ENCODE measurements at regions of chr2 and their contacts with region 1.

Region 1: DNA sequence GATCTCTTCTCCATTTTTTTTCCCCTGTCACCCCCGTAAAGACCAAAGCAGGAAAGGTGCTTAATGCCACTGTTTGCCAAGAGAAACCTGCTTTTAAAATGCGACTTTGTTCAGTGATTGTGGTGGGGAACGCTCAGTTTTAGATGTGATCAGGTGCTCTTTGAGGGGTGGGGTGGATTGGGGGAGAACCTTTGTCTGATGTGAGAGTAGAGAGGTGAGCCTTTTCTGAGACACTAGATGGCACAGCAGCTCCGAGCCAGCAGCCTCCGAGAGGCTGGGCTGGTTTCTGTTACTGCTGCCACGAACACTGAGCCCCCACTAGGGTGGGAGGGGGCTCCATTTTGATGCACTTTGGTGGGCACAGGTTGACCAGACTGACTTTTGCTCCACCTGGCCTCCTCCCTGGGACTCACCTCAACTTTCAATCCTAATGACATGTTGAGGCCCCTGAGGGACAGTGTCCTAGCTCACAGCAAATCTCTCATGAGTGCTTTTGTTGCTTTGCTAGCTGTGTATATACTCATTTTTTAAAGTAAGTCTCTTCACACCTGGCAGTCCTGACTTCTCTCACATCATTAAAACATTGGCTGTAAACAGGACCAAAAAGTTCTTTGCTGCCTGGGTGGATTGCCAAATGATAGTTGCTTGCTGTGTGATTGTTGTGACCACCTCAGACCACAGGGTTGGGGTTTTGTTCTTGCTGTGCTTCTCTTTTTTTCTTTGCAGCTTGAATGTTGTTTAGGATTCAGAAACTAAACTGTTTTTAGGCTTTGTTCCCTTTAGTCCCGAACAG is 98.2 kb upstream of the MAP3K20 start:
- DNase-seq: no peak
- H3K4me3 ChIP-seq: no peak overlapping the region
- H3K27ac ChIP-seq: no peak overlapping the region
- H3K4me1 ChIP-seq: peaks cover 0 to 2% of the 10 kb centered on the region in 2 donors
- H3K27me3 ChIP-seq: no peaks in the 10 kb centered on the region
- CTCF ChIP-seq: no peak
- POLR2A ChIP-seq: no peak

Region 2: GRCh38 chr2:171104379-171104778 is 1873.1 kb before region 1 on chr2:
- intact Hi-C with region 1: no loop called
- DNase-seq: no peak
- H3K4me3 ChIP-seq: no peak overlapping the region
- H3K27ac ChIP-seq: no peak overlapping the region
- H3K4me1 ChIP-seq: no peaks in the 10 kb centered on the region
- H3K27me3 ChIP-seq: no peaks in the 10 kb centered on the region
- CTCF ChIP-seq: no peak
- POLR2A ChIP-seq: no peak

Region 3: GRCh38 chr2:173017646-173018420 is 40.4 kb after region 1 on chr2:
- intact Hi-C with region 1: loop called in 1 of 2 experiments (anchors 5 kb)
- DNase-seq: peak in 3 of 7 donors; percentile 42 to 63 (median 54)
- H3K4me3 ChIP-seq: no peak overlapping the region
- H3K27ac ChIP-seq: peak overlapping the region in 2 of 5 donors; percentile 1 to 45
- H3K4me1 ChIP-seq: peaks cover 0 to 11% of the 10 kb centered on the region in 2 donors
- H3K27me3 ChIP-seq: no peaks in the 10 kb centered on the region
- CTCF ChIP-seq: no peak
- POLR2A ChIP-seq: no peak

Region 4: DNA sequence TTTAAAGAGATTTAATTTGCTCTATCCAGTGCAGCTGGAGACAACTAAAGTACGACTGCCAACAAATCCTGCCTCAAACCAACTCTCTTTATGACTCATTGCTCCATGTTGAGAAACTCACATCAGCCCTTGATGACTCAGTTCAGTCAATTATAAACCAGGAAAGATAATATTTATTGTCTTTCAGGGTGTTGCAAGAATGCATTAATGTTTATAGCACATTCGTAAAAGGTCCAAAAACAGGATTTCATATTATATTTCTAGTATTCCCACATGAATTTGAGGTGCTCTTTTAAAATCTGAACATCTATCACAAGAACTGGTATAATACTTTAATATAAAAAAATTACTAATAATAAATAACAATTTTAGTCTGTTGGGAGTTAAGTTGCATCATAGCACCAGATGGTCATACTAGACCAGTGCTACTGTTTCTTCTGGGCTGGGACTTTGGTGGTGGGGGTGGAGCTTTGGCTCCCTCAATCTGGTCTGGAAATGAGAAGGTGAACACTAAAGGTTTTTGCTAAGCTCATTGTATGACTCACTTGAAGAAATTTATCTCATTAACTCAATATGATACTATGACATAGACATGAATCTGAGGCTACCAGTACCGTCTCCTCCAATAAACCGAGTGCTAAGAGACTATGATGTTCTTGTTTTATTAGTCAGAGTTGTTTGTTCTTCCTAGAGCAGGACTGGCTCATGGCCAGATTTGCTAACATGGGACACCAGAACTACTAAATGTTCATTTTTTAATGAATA is 71.6 kb after region 1 on chr2:
- intact Hi-C with region 1: no loop called
- DNase-seq: peak; percentile 40 to 81 (median 77)
- H3K4me3 ChIP-seq: no peak overlapping the region
- H3K27ac ChIP-seq: peak overlapping the region; percentile 16 to 77 (median 45)
- H3K4me1 ChIP-seq: peaks cover 10 to 16% of the 10 kb centered on the region in 2 donors
- H3K27me3 ChIP-seq: no peaks in the 10 kb centered on the region
- CTCF ChIP-seq: no peak
- POLR2A ChIP-seq: no peak

Region 5: GRCh38 chr2:173254659-173255058 is 277.2 kb after region 1 on chr2:
- intact Hi-C with region 1: no loop called
- DNase-seq: no peak
- H3K4me3 ChIP-seq: no peak overlapping the region
- H3K27ac ChIP-seq: no peak overlapping the region
- H3K4me1 ChIP-seq: no peaks in the 10 kb centered on the region
- H3K27me3 ChIP-seq: no peaks in the 10 kb centered on the region
- CTCF ChIP-seq: no peak
- POLR2A ChIP-seq: no peak

Region 6: DNA sequence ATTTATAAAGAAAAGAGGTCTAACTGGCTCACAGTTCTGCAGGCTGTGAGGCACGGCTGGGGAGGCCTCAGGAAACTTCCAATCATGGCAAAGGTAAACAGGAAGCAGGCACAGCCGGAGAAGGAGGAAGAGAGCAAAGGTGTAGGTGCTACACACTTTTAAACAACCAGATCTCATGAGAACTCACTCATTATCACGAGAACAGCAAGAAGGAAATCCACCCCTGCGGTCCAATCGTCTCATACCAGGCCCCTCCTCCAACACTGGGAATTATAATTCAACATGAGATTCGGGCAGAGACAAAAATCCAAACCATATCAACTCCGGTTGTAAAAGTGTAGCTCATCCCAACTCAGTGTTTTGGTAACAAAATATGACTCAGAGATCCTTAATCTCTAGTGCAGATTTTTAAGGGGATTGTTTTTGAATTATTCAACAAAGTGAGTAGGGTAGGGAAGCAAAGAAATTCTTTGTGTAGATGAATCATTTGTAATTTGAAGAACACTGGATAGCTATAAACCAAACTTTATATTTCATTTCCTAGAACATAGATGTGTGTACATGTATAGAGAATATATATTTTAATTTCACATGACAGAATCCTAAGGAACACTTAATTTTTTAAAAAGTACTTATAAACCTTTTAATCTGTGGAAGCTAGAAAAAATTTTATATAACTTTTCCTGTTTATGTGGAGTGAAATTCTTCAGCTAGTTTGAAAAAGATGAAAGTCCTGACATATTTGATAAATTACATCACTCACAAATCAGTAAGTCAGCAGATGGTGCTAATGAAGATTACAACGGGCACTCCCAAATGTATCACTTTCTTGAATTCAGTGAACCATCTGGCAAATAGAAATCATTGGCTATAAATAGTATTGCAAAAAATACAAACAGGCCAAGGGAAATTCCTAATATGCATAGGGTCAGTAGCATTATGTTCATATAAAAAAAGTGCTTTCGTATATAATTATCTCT is 1140.8 kb after region 1 on chr2:
- intact Hi-C with region 1: no loop called
- DNase-seq: no peak
- H3K4me3 ChIP-seq: no peak overlapping the region
- H3K27ac ChIP-seq: no peak overlapping the region
- H3K4me1 ChIP-seq: no peaks in the 10 kb centered on the region
- H3K27me3 ChIP-seq: no peaks in the 10 kb centered on the region
- CTCF ChIP-seq: no peak
- POLR2A ChIP-seq: no peak